GM12878 (cell line): ENCODE measurements at regions of chr10 and their contacts with region 1.

Region 1: GRCh38 chr10:62907470-62908212 is 91.5 kb upstream of the EGR2 start:
- DNase-seq: no peak
- ATAC-seq: peak; percentile 55; the same call in 2 of the 3 replicates
- H3K4me3 ChIP-seq: no peak overlapping the region
- H3K27ac ChIP-seq: no peak overlapping the region
- H3K4me1 ChIP-seq: peaks cover 28% of the 10 kb centered on the region
- H3K27me3 ChIP-seq: no peaks in the 10 kb centered on the region
- CTCF ChIP-seq: no peak
- EP300 ChIP-seq: no peak
- POLR2A ChIP-seq: no peak
- RAD21 ChIP-seq: no peak

Region 2: DNA sequence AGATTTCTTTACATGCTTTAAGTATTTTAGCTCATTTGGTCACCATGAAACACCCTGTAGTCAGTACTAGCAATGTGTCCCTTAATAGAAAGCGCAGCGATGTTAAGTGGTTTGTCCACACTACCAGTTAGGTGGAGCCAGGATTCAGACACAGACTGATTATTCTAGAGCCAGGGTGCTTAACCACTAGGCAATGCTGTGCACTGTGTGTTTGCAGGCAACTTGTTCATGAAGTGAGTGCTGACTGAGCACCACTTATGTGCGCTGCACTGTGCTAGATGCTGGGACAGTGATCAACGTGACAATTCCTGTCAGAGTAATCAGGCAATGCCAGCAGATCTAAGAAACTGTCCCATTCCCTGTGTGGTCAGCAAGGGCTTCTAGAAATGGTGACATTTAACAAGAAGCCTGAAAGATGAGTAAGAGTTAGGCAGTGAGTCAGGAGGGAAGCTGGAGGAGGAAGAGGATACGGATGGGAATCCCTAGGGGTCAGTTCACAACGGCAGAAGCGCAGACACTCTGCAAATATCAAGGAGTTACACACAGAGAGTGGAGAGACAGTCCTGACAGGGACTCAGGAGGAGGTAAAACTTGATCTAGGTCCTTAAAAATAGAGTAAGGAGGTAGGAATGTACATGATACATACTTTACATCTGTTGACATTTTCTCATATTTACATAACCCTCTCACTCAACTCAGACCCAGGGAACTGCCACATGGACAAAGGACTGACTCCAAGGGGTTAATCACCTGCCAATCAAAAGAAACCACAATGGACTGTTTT is 21.8 kb before region 1 on chr10:
- CTCF ChIA-PET with region 1: no interaction called
- POLR2A ChIA-PET with region 1: no interaction called
- RAD21 ChIA-PET with region 1: no interaction called
- SMC1A ChIA-PET with region 1: interaction called, 5 read pairs
- in situ Hi-C with region 1: no loop called
- intact Hi-C with region 1: loop called (anchors 1 kb)
- DNase-seq: no peak
- ATAC-seq: no peak
- H3K4me3 ChIP-seq: no peak overlapping the region
- H3K27ac ChIP-seq: no peak overlapping the region
- H3K4me1 ChIP-seq: no peaks in the 10 kb centered on the region
- H3K27me3 ChIP-seq: no peaks in the 10 kb centered on the region; a peak in 1 of 4 replicates
- CTCF ChIP-seq: no peak
- EP300 ChIP-seq: no peak
- POLR2A ChIP-seq: no peak
- RAD21 ChIP-seq: no peak

Region 3: DNA sequence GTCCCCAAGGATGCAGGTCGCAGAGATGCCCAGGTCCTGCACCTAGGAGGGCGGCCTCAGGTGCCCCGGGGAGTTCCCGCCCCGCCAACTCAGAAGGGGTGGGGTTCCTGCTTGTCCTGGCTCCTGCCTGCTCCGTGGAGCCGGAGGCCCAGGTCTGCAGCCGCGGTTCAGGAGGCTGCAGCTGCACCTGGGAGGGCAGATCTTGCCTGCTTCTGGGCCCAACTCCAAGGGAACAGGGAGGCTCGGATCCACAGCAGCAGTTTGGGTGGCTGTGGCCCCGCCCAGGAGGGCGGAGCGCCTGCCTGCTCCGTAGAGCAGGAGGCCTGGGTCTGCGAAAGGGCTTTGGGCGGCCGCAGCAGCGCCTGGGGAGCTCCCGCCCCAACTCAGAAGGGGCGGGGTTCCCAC is 16.7 kb after region 1 on chr10:
- CTCF ChIA-PET with region 1: interaction called, 5 read pairs
- POLR2A ChIA-PET with region 1: interaction called, 4 read pairs
- RAD21 ChIA-PET with region 1: no interaction called
- SMC1A ChIA-PET with region 1: interaction called, 32 read pairs
- in situ Hi-C with region 1: no loop called
- intact Hi-C with region 1: no loop called
- DNase-seq: no peak
- ATAC-seq: peak; percentile 99
- H3K4me3 ChIP-seq: peak overlapping the region; percentile 49; the same call in 1 of the 2 replicates
- H3K27ac ChIP-seq: no peak overlapping the region
- H3K4me1 ChIP-seq: 0 out of 2 replicates have a peak, but pooled peaks cover 3% of the 10 kb centered on the region
- H3K27me3 ChIP-seq: no peaks in the 10 kb centered on the region
- CTCF ChIP-seq: no peak
- EP300 ChIP-seq: no peak
- POLR2A ChIP-seq: no peak
- RAD21 ChIP-seq: no peak

Region 4: DNA sequence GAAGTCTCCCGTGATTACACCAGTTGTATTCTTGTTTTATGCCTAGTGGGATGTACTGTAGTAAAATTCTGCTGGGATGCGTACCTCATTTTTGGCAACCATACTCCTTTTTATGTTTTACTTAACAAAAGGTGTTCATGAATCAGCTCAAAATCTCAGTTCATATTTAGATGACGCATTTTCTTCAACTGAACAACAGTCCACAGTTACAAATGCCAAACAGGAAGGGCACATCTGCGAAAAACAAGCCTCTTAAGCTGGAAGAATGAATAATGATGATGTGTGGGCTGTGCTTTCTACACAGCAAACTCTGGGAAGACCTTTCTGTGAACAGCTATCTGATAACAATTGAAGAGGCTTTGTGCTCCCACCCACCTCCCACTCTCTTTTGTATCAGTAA is 157.1 kb after region 1 on chr10:
- CTCF ChIA-PET with region 1: no interaction called
- POLR2A ChIA-PET with region 1: no interaction called
- RAD21 ChIA-PET with region 1: no interaction called
- SMC1A ChIA-PET with region 1: no interaction called
- in situ Hi-C with region 1: no loop called
- intact Hi-C with region 1: no loop called
- DNase-seq: no peak
- ATAC-seq: no peak
- H3K4me3 ChIP-seq: no peak overlapping the region
- H3K27ac ChIP-seq: no peak overlapping the region
- H3K4me1 ChIP-seq: no peaks in the 10 kb centered on the region
- H3K27me3 ChIP-seq: no peaks in the 10 kb centered on the region; a peak in 1 of 4 replicates
- CTCF ChIP-seq: no peak
- EP300 ChIP-seq: no peak
- POLR2A ChIP-seq: no peak
- RAD21 ChIP-seq: no peak

Region 5: GRCh38 chr10:63286754-63287264 is 379.2 kb after region 1 on chr10:
- CTCF ChIA-PET with region 1: no interaction called
- POLR2A ChIA-PET with region 1: no interaction called
- RAD21 ChIA-PET with region 1: no interaction called
- SMC1A ChIA-PET with region 1: no interaction called
- in situ Hi-C with region 1: no loop called
- intact Hi-C with region 1: no loop called
- DNase-seq: peak; percentile 66
- ATAC-seq: peak; percentile 83
- H3K4me3 ChIP-seq: peak overlapping the region; percentile 19; the same call in 1 of the 2 replicates
- H3K27ac ChIP-seq: peak overlapping the region; percentile 73
- H3K4me1 ChIP-seq: peaks cover 32% of the 10 kb centered on the region
- H3K27me3 ChIP-seq: no peaks in the 10 kb centered on the region
- CTCF ChIP-seq: no peak
- EP300 ChIP-seq: peak; percentile 24 to 69; a peak in 1 of 4 replicates
- POLR2A ChIP-seq: no peak
- RAD21 ChIP-seq: no peak